H1 (cell line): ENCODE measurements at regions of chr10 and their contacts with region 1.

Region 1: DNA sequence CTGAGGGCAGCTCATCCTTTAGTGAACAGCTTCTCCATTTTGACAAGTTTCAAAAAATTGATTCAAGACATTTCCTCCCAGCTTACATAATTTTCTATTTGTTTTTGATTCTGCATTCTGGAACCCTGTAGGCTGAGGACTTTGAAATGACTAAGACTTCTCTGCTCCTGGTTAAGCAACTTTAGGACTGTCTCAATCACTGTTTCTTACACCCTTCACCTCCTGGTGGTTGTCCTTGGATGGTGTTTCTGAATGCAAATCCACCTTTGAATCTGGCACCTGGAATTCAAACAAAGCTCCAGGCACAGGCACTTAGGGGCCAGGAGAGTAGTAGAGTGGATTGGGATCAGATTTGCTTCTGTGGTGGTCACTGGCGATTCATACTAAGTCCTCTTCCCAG is 595.5 kb downstream of the LRMDA start:
- DNase-seq: no peak
- H3K4me3 ChIP-seq: no peak overlapping the region
- H3K27ac ChIP-seq: no peak overlapping the region
- H3K4me1 ChIP-seq: no peaks in the 10 kb centered on the region
- H3K27me3 ChIP-seq: no peaks in the 10 kb centered on the region
- CTCF ChIP-seq: peak in 2 of 3 experiments; percentile 24 to 25; a peak in 2 of 4 replicates
- EP300 ChIP-seq: no peak
- POLR2A ChIP-seq: no peak
- RAD21 ChIP-seq: peak; percentile 30 to 53

Region 2: DNA sequence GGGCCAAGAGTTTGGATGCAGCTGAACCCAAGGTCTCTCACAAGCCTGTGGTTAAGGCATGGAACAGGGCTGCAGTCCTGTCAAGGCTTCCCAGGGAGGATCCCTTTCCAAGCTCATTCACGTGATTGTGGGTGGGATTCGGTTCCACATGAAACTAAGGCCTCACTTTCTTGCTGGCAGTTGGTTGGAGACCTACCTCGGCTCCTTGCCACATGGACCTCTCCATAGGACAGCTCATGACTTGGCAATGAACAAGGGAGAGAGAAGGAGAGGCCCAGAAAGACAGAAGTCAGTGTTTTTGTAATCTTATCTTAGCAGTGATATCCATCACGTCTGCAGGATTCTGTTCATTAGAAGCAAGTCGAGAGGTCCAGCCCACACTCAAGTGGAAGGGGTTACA is 11.7 kb before region 1 on chr10:
- CTCF ChIA-PET with region 1: interaction called, 17 read pairs
- POLR2A ChIA-PET with region 1: no interaction called
- DNase-seq: no peak
- H3K4me3 ChIP-seq: no peak overlapping the region
- H3K27ac ChIP-seq: no peak overlapping the region
- H3K4me1 ChIP-seq: 0 out of 7 replicates have a peak, but pooled peaks cover 0 to 2% (median 0%) of the 10 kb centered on the region in 4 experiments
- H3K27me3 ChIP-seq: no peaks in the 10 kb centered on the region
- CTCF ChIP-seq: no peak
- EP300 ChIP-seq: no peak
- POLR2A ChIP-seq: no peak
- RAD21 ChIP-seq: no peak

Region 3: GRCh38 chr10:76231286-76231934 is 204.5 kb after region 1 on chr10:
- CTCF ChIA-PET with region 1: no interaction called
- POLR2A ChIA-PET with region 1: no interaction called
- DNase-seq: peak in 1 of 2 experiments; percentile 53
- H3K4me3 ChIP-seq: no peak overlapping the region
- H3K27ac ChIP-seq: no peak overlapping the region
- H3K4me1 ChIP-seq: peaks cover 0 to 7% (median 6%) of the 10 kb centered on the region in 4 experiments; a peak in 3 of 7 replicates
- H3K27me3 ChIP-seq: peaks cover 68 to 93% (median 82%) of the 10 kb centered on the region in 4 experiments
- CTCF ChIP-seq: no peak
- EP300 ChIP-seq: peak in 1 of 2 experiments; percentile 67; a peak in 1 of 3 replicates
- POLR2A ChIP-seq: no peak
- RAD21 ChIP-seq: no peak